Right ventricle myocardium inferior (tissue), 1 donor: ENCODE measurements at regions of chr15 and their contacts with region 1.

Region 1: GRCh38 chr15:40506964-40507571 is 36.3 kb downstream of the CHST14 start:
- DNase-seq: peak; percentile 84
- ATAC-seq: peak; percentile 88

Region 2: DNA sequence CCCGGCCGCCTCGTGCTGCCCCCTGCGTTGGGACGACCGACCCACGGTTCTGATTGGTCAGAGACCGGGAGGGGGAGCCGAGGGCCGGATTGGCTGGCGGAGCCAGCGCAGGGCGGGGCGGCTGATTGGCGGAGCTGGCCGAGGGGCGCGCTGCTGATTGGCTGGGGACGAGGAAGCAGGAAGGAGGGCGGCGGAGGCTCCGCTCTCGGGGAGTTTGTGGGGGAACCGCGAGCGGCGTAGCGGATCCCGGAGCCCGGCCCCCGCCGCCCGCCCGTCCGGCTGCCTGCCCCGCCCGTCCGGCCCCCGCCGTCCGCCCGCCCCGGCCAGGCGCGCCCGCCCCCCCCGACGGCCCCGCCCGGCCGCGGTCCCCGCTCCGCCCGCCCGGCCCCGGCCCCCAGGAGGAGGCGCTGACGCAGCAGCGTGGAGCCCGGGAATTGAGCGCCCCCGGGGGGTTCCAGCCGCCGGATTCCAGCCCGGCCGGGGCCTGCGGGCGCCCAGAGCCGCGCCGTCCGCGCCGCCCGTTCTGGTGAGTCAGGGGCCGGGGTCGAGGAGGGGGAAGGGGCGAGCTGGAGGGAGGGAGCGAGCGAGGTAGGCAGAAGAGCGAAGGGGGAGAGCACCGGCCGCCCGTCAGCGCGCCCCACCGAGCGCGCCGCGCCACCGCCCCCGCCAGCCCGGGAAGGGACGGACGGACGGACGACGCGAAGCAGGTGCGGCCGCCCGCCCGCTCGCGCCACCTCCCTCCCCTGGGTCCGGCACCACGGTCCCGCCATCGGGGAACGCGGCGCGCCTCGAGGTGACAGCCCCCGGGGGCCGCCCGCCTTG is 66.1 kb before region 1 on chr15 and contains the start of gene BAHD1:
- intact Hi-C with region 1: loop called (anchors 2 kb)
- DNase-seq: peak; percentile 98
- ATAC-seq: peak; percentile 92
- total RNA-seq, gene BAHD1: 17.7 TPM

Region 3: GRCh38 chr15:40564591-40565332 is 57.7 kb after region 1 on chr15 and contains the start of gene CCDC32:
- intact Hi-C with region 1: loop called (anchors 10 kb)
- DNase-seq: peak; percentile 99
- ATAC-seq: peak; percentile 99
- total RNA-seq, gene CCDC32: 15.6 TPM

Region 4: GRCh38 chr15:40694688-40695468 is 187.8 kb after region 1 on chr15 and contains the start of gene RAD51:
- intact Hi-C with region 1: loop called (anchors 10 kb)
- DNase-seq: peak; percentile 97
- ATAC-seq: peak; percentile 98
- total RNA-seq, gene RAD51: 2.0 TPM

Region 5: GRCh38 chr15:40754883-40755811 is 248.1 kb after region 1 on chr15 and contains the start of gene RMDN3:
- intact Hi-C with region 1: loop called (anchors 10 kb)
- DNase-seq: peak; percentile 98
- ATAC-seq: peak; percentile 99
- total RNA-seq, gene RMDN3: 19.1 TPM

Region 6: GRCh38 chr15:40893733-40894688 is 386.9 kb after region 1 on chr15 and contains the start of gene VPS18:
- intact Hi-C with region 1: loop called (anchors 10 kb)
- DNase-seq: peak; percentile 99
- ATAC-seq: peak; percentile 98
- total RNA-seq, gene VPS18: 20.6 TPM